ENCODE measurements at regions of chr4 and their contacts with region 1.

Region 1: DNA sequence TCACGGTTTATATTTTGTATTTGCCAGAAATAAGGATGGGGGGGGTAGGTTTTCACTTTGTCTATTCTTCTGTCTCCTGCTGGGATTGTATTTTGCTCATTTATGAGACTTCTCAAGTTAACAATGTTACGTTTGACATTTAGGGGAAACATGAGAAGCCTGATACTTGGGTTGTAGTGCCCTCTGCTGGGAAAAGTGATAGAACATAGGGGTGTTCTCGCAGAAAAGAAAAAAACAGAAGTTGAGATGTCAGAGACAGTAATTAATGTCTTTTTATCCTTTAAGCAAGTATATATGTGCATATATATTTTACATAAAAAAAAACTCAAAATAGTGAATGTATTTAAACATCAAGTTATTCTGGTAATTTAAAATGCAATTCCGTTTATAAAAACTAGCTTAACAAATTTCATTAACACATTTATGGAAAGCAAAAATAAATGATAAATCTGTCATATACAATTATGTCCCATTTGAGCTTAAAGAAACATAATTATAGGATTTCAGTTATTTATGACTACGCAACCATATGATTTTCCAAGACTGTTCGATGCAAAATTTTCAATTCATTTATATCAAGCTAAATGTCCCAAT is 46.0 kb upstream of the TMPRSS11F start:
- DNase-seq: peak; percentile 53
- H3K4me3 Mint-ChIP-seq: no peak overlapping the region
- H3K27ac Mint-ChIP-seq: no peak overlapping the region
- H3K4me1 Mint-ChIP-seq: peaks cover 8% of the 10 kb centered on the region
- H3K27me3 Mint-ChIP-seq: no peaks in the 10 kb centered on the region
- CTCF ChIP-seq: peak; percentile 35

Region 2: DNA sequence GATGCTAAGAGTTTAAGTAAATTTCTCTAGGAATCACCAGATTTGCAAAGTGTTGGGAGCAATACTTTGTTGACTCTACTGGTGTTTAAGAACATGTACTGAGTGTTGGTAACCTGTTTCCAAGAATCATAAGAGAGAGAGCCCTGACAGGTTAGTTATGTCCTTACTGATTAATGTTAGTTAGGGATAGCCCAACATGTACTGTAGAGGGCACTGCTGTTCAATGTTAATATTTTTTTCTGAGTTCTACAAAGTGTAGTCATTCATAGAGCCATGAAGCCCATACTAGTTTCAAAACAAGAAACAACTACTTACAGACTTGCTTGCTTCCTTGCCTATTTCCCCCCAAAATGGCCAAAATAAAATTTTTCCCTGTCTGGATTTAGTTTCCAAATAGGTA is 303.8 kb before region 1 on chr4:
- CTCF ChIA-PET with region 1: no interaction called
- intact Hi-C with region 1: loop called (anchors 1 kb)
- DNase-seq: no peak
- H3K4me3 Mint-ChIP-seq: no peak overlapping the region
- H3K27ac Mint-ChIP-seq: no peak overlapping the region
- H3K4me1 Mint-ChIP-seq: no peaks in the 10 kb centered on the region
- H3K27me3 Mint-ChIP-seq: no peaks in the 10 kb centered on the region
- CTCF ChIP-seq: no peak

Region 3: DNA sequence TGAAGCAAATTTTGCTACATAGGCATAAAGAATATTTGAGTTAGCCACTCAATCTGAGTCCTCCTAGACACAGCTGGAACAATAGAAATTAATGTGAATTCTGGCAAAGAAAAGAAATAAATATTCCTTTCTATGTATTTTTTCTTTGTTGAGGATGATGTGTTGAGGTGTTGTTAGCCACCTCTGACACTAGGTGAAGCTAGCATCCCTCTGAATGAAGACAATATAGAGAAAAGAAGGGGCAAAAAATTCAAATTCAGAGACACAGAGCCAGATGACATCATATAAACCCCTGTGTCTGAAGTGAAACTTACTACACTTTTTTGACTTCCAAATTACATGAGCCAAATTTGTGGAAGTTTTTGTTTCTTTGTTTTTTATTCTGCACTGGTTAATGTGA is 257.2 kb before region 1 on chr4:
- CTCF ChIA-PET with region 1: no interaction called
- intact Hi-C with region 1: loop called (anchors 1 kb)
- DNase-seq: no peak
- H3K4me3 Mint-ChIP-seq: no peak overlapping the region
- H3K27ac Mint-ChIP-seq: no peak overlapping the region
- H3K4me1 Mint-ChIP-seq: no peaks in the 10 kb centered on the region
- H3K27me3 Mint-ChIP-seq: no peaks in the 10 kb centered on the region
- CTCF ChIP-seq: peak; percentile 18

Region 4: DNA sequence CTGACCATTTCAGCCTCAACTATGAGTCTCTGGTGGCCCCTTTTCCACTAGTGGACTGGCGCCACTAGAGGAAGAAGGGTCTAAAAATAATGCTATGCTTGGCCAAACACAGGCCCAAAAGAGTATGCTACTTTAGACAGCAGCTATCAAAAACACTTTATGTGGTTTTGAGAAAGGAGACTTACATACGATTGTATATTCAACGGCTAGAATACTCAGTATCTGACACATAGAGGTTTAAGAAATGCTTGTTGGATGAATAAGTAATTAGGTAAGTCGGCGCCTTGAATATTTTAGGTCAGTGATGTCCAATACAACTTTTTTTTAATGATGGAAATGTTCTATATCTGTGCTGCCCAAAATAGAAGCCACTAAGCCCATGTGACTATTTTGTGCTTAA is 186.7 kb before region 1 on chr4:
- CTCF ChIA-PET with region 1: no interaction called
- intact Hi-C with region 1: loop called (anchors 1 kb)
- DNase-seq: no peak
- H3K4me3 Mint-ChIP-seq: no peak overlapping the region
- H3K27ac Mint-ChIP-seq: no peak overlapping the region
- H3K4me1 Mint-ChIP-seq: no peaks in the 10 kb centered on the region
- H3K27me3 Mint-ChIP-seq: no peaks in the 10 kb centered on the region
- CTCF ChIP-seq: no peak

Region 5: DNA sequence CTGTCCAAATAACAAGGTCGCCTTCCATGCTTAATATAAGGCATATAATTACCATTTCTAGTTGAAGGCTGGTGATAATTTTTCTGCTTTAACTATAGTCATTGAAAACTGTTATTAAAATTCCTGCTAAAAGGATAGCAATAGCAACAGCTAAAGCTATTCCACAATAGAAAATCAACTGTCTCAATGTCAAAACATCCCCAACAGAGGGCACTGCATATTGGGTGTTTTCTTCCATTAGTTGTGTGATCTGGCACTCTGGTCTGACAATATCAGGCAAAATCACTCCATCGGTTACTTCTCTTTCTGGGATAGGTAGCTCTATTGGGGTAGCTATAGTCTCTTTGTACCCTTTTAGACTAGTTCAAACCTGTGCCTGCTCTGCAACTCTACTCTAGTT is 99.5 kb before region 1 on chr4:
- CTCF ChIA-PET with region 1: interaction called, 3 read pairs
- intact Hi-C with region 1: loop called (anchors 5 kb)
- DNase-seq: no peak
- H3K4me3 Mint-ChIP-seq: no peak overlapping the region
- H3K27ac Mint-ChIP-seq: no peak overlapping the region
- H3K4me1 Mint-ChIP-seq: no peaks in the 10 kb centered on the region
- H3K27me3 Mint-ChIP-seq: no peaks in the 10 kb centered on the region
- CTCF ChIP-seq: no peak

Region 6: DNA sequence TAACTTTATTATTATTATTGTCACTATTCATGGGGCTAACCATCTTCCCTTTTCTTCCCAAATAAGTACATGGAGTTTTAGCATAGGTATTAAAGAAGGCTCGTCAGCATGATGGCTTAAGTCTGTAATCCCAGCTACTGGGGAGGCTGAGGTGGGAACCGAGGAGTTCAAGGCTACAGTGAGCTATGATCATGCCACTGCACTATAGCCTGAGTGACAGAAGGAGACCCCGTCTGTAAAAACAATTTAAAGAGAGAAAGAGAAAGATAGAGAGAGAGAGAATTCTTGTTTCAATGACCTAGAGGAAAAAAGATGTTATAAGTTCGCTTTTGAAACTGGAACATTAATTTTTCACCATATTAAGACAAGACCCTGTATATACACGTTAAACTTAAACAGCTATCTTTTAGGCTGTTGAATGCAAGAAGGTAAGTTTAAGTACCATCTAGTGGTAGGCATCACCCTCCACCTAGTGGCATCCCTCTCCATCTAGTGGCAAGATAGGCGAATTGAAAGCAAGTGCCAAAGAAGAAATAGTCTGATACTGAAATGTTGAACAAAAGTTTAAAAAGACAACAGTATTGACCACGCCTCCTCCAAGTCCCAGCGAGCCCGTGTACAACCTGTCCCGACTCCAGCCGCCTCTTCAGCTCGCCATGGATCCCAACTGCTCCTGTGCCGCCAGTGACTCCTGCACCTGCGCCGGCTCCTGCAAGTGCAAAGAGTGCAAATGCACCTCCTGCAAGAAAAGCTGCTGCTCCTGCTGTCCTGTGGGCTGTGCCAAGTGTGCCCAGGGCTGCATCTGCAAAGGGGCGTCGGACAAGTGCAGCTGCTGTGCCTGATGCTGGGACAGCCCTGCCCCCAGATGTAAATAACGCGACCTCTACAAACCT is 200.3 kb after region 1 on chr4:
- CTCF ChIA-PET with region 1: no interaction called
- intact Hi-C with region 1: loop called (anchors 5 kb)
- DNase-seq: peak; percentile 53
- H3K4me3 Mint-ChIP-seq: peak overlapping the region; percentile 78
- H3K27ac Mint-ChIP-seq: no peak overlapping the region
- H3K4me1 Mint-ChIP-seq: peaks cover 12% of the 10 kb centered on the region
- H3K27me3 Mint-ChIP-seq: no peaks in the 10 kb centered on the region
- CTCF ChIP-seq: peak; percentile 69

Measured in Calu3 (cell line).